Endothelial cell of umbilical vein (primary cell): ENCODE measurements at regions of chr3 and their contacts with region 1.

Region 1: DNA sequence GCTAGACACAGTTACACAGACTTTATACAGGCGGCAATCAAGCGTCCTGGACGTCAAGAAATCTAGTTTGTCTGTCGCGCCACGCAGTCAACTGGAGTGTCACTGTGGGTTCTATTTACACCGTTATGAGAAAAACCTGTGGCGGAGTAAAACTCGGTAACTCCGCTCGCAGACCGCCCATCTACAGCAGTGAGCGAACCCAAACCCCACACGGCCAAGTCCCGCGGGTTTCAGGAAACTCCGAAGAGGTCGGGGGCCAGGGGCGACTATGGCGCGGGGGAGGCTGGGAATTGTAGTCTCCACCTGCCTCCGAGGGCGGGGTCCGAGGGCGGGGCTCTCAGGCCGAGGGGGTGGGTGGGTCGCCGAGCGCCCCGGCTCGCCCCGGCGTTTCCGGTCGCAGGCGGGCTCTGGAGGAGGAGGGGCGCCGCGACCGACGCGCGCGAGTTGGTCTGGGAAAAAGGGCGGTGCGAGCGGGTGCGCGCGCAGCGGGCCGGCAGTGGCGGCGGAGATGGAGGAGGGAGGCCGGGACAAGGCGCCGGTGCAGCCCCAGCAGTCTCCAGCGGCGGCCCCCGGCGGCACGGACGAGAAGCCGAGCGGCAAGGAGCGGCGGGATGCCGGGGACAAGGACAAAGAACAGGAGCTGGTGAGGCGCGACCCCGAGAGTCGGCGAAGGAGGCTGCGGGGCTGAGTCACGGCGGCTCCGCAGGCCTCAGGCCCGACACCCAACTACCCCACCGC is at the start of gene PSMD2:
- DNase-seq: peak; percentile 96
- H3K4me3 ChIP-seq: peak within 1 kb of the TSS; percentile 71 to 89 (median 88)
- H3K27ac ChIP-seq: peak within 1 kb of the TSS; percentile 70
- H3K4me1 ChIP-seq: peaks cover 13% of the 10 kb centered on the region
- H3K27me3 ChIP-seq: peaks cover 0 to 3% of the 10 kb centered on the region in 2 experiments
- CTCF ChIP-seq: no peak
- POLR2A ChIP-seq: peak; percentile 85
- total RNA-seq, gene PSMD2: 400 and 435 TPM in 2 replicates

Region 2: GRCh38 chr3:184314363-184314699 is 15.4 kb after region 1 on chr3 and contains the start of gene EIF4G1:
- CTCF ChIA-PET with region 1: interaction called, 4 read pairs
- POLR2A ChIA-PET with region 1: no interaction called
- dilution Hi-C with region 1: no loop called
- intact Hi-C with region 1: loop called (anchors 1 kb)
- DNase-seq: peak; percentile 94
- H3K4me3 ChIP-seq: peak within 1 kb of the TSS; percentile 37 to 84 (median 59)
- H3K27ac ChIP-seq: peak within 1 kb of the TSS; percentile 64
- H3K4me1 ChIP-seq: peaks cover 28% of the 10 kb centered on the region
- H3K27me3 ChIP-seq: no peaks in the 10 kb centered on the region
- CTCF ChIP-seq: no peak
- POLR2A ChIP-seq: peak; percentile 79
- total RNA-seq, gene EIF4G1: 524 and 532 TPM in 2 replicates